Panc1 (cell line): ENCODE measurements at regions of chr11 and their contacts with region 1.

Region 1: GRCh38 chr11:84714316-84714780 is 912.8 kb downstream of the DLG2 start:
- DNase-seq: peak; percentile 2
- ATAC-seq: peak; percentile 76
- H3K4me3 ChIP-seq: no peak overlapping the region
- H3K27ac ChIP-seq: no peak overlapping the region
- H3K4me1 ChIP-seq: no peaks in the 10 kb centered on the region
- H3K27me3 ChIP-seq: 0 out of 2 replicates have a peak, but pooled peaks cover 3% of the 10 kb centered on the region
- CTCF ChIP-seq: peak; percentile 64

Region 2: DNA sequence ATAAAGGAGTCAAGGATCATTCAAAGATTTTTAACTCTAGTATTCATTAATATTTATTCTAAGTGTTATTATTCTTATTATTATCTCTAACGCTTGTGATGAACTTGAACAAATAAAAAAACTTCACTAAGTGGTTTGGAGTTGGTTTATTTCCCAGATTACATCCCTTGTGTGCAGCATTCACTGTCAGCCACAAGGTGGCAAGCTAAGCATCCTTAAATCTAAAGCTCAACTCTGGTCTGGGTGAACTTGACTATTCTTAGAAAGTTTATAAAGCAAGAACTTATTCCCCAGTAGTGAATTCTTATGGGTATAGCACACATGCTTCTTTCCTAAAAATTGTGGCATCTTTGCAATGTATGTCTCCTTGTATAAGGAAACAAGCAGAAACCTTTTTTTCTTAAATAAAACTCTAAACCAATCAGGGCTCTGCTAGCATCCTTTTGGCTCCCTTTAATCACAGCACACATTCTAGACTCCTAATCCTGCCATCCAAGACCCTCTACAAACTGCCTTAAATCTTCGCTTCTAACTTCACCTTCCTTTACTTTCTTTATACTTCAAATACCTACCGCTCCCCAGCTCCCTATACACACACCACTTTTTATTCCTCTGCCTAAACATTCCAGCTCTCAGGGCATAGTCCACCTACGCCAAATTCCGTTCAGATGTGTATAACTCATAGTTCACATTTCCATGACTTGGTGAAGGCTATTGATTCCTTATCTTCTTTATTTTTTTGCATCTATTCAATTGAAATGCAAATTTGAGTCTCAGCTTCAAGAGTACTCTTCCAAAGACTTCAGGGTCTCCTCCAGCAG is 156.1 kb before region 1 on chr11:
- CTCF ChIA-PET with region 1: no interaction called
- POLR2A ChIA-PET with region 1: no interaction called
- in situ Hi-C with region 1: no loop called
- intact Hi-C with region 1: loop called (anchors 5 kb)
- DNase-seq: peak; percentile 20
- ATAC-seq: peak; percentile 89
- H3K4me3 ChIP-seq: no peak overlapping the region
- H3K27ac ChIP-seq: no peak overlapping the region
- H3K4me1 ChIP-seq: no peaks in the 10 kb centered on the region
- H3K27me3 ChIP-seq: no peaks in the 10 kb centered on the region
- CTCF ChIP-seq: peak; percentile 83